HepG2 (cell line): ENCODE measurements at regions of chrX and their contacts with region 1.

Region 1: DNA sequence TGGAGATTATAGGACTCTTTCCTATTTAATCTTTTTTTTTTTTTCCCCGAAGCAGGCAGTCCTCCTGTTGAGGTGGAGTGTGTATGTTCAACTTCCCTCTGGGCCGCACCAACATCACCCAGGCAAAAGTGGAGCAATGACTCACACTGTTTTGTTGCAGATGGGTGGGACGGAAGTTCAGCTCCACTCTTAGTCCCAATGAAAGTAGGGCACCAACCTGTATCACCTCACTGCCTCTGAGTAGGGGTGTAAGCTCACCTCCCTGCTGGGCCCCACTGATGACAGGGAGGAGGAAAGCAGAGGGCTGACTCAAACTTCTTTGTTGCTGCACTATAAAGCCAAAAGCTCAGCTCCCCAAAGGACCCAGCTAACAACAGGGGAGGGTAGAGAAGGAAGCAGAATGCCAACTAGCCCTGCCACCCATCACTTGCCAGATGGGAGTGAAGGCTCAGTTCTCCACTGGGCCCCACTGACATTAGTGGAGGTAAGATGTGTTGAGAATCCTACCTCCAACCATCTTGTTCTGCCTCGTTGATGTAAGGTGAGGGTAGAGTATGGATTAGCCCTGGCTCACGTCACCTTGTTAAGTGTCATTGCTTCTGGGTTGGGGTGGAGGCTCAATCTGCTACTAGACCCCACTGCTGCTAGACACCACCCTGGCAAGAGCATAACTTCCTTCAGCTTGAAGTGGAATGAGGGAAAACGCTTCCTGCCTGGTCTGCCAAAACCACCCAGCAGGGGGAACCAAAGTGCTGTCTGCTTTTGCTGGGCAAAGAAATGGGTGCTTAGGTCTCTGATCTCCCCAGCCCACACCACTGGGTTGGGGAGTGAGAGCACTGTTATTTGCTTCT is 14.1 kb downstream of the RPS6KA3 start:
- DNase-seq: peak; percentile 35
- ATAC-seq: peak; percentile 60
- H3K4me3 ChIP-seq: no peak overlapping the region
- H3K27ac ChIP-seq: peak overlapping the region; percentile 35
- H3K4me1 ChIP-seq: peaks cover 91% of the 10 kb centered on the region
- H3K27me3 ChIP-seq: no peaks in the 10 kb centered on the region
- CTCF ChIP-seq: peak; percentile 59
- EP300 ChIP-seq: no peak
- POLR2A ChIP-seq: peak in 1 of 2 experiments; percentile 7; a peak in 2 of 4 replicates
- RAD21 ChIP-seq: peak; percentile 51; the same call in 1 of the 2 replicates

Region 2: DNA sequence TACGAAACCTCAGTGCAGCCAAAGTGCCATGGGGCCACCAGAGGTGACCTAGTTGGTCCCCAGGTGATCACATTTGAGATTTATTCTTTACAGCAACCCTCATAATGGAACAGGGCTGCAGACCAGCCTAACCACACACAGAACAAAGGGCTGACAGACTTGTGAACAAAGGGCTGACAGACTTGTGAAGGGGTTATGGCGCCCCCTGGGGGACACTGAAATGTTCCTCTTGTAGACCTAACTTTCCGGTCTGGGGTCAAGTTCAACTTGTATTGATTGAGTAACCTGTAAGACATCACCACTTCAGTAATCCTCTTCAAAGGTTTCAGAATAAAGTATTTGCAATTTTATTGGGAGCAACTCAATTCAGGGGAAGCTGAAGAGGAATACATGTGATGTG is 190.0 kb after region 1 on chrX:
- CTCF ChIA-PET with region 1: interaction called, 16 read pairs
- POLR2A ChIA-PET with region 1: interaction called, 12 read pairs
- in situ Hi-C with region 1: loop called (anchors 5 kb)
- intact Hi-C with region 1: loop called (anchors 1 kb)
- DNase-seq: peak; percentile 76
- ATAC-seq: peak; percentile 88
- H3K4me3 ChIP-seq: no peak overlapping the region
- H3K27ac ChIP-seq: peak overlapping the region; percentile 46
- H3K4me1 ChIP-seq: peaks cover 63% of the 10 kb centered on the region
- H3K27me3 ChIP-seq: no peaks in the 10 kb centered on the region
- CTCF ChIP-seq: peak; percentile 72
- EP300 ChIP-seq: peak in 1 of 2 experiments; percentile 61; a peak in 2 of 4 replicates
- POLR2A ChIP-seq: no peak
- RAD21 ChIP-seq: peak; percentile 83

Region 3: DNA sequence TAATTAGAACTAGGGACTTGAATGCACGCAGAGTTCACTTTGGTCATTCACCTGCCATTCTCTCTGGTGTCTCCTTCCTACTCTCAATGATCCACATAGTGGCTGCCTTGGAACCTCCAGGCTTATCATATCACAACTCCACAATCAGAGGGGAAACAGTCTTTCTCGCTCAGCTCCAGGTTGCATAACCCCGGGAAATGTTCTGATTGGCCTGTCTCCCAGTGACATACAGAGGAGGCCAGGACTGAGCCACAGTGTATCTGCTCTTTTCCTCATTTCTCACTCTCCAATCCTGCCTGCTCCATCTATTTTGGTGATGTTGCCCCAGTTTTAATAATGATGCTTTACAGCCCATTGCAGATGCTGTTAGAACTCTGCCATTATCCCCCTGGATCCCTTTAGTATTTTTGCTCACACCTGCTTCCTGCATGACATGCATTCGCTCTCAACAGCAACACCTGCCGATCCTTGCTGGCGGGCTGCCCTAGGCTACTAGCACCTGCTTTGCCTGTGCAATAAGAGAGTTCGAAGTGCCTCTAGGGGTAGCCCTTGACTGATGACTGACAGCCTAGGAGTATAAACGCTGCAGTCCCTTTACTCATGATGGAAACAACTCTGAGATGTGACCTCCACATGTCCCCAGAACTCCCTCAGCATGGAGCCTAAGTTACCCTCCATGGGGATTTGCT is 225.4 kb after region 1 on chrX:
- CTCF ChIA-PET with region 1: no interaction called
- POLR2A ChIA-PET with region 1: interaction called, 3 read pairs
- in situ Hi-C with region 1: no loop called
- intact Hi-C with region 1: loop called (anchors 10 kb)
- DNase-seq: no peak
- ATAC-seq: peak; percentile 37
- H3K4me3 ChIP-seq: no peak overlapping the region
- H3K27ac ChIP-seq: peak overlapping the region; percentile 92
- H3K4me1 ChIP-seq: peaks cover 98% of the 10 kb centered on the region
- H3K27me3 ChIP-seq: no peaks in the 10 kb centered on the region
- CTCF ChIP-seq: no peak
- EP300 ChIP-seq: no peak
- POLR2A ChIP-seq: no peak
- RAD21 ChIP-seq: no peak

Region 4: DNA sequence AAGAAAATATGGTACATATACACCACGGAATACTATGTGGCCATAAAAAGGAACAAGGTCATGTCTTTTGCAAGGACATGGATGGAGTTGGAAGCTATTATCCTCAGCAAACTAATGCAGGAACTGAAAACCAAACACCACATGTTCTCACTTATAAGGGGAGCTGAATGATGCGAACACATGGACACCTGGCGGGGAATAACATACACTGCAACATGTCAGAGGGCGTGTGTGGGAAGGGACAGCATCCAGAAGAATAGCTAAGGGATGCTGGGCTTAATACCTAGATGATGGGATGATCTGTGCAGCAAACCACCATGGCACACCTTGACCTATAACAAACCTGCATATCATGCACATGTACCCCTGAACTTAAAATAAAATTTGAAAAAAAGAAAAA is 1102.1 kb after region 1 on chrX:
- CTCF ChIA-PET with region 1: no interaction called
- POLR2A ChIA-PET with region 1: no interaction called
- in situ Hi-C with region 1: no loop called
- intact Hi-C with region 1: loop called (anchors 10 kb)
- DNase-seq: peak; percentile 1
- ATAC-seq: peak; percentile 68
- H3K4me3 ChIP-seq: no peak overlapping the region
- H3K27ac ChIP-seq: no peak overlapping the region
- H3K4me1 ChIP-seq: no peaks in the 10 kb centered on the region
- H3K27me3 ChIP-seq: no peaks in the 10 kb centered on the region
- CTCF ChIP-seq: peak; percentile 45
- EP300 ChIP-seq: no peak
- POLR2A ChIP-seq: no peak
- RAD21 ChIP-seq: no peak